Lower leg skin (tissue), 4 donors: ENCODE measurements at regions of chr6 and their contacts with region 1.

Region 1: DNA sequence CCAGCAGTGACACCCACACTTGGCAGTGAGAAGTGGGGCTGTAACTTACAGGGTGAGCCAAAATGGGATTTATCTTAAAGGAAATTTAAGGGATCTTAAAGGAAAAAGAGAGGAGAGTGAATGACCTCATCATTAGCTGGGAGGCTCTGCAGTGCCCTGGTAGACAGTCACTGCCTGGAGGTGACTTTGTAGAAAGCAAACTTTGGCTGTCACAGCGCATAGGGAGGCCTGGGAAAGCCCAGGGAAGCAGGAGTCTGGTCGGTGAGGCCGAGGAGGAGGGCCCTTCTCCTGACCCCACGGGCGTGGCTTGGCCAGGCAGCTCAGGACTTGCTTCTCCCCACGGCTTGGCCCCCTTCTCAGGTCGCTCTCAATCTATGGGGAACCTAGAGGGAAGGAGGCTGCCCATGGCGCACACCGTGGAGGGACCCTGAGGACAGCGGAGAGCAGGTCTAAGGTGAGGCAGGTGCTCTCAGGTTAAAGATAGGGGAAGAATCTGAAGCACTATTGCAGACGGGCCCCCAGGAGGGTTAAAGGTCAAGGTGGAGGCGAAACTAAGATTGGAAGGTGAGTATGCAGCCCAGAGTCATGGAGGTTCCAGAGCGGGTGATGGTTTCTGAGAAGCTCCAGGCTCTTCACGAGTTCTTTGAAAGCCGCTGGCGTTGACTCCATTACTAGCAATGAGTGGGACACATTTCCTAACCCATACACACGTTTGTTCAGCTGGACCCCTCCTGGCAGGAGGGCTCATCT is 15.6 kb upstream of the RIPK1 start:
- DNase-seq: no peak
- H3K4me3 ChIP-seq: no peak overlapping the region
- CTCF ChIP-seq: no peak
- POLR2A ChIP-seq: no peak

Region 2: GRCh38 chr6:2999618-3000557 is 52.8 kb before region 1 on chr6 and contains the start of gene NQO2:
- intact Hi-C with region 1: loop called (anchors 2 kb)
- DNase-seq: peak; percentile 89 to 99
- H3K4me3 ChIP-seq: peak within 1 kb of the TSS; percentile 62
- CTCF ChIP-seq: no peak
- POLR2A ChIP-seq: peak in 1 of 2 donors; percentile 56
- total RNA-seq, gene NQO2: 24.4 to 40.5 (median 36.7) TPM

Region 3: DNA sequence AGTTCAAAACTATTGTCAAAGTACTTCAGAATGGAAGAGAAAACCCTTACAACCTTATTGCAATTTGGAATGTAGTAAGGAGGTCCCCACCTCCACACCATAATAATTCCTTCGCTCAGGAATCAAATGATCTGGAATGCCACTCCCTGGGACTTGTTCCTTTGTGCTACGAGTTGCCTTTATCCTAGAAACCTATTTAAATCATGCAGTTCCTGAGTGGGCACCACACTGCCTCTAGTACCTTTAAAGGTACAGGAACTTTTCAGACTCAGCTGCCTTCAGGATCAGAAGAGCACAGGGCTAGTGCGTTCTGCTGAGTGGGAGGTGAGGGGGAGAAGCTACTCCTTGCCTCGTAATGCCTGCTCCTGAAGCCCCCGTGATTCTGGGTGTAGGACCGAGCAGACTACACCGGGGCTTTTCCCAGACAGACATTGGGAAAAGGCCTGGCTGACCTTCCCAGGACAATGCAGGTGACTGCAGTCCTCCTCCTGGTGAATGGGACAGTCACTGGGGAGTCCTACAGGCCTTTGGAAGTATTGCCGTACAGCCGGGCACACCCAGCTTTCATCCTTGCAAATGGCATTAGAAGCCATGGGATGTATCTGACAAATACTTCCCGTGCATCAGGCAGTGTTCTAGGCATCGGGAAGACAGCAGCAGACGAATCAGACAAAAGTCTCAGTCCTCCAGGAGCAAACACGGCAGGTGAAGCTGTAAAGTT is 186.6 kb after region 1 on chr6:
- intact Hi-C with region 1: no loop called
- DNase-seq: peak in 1 of 2 donors; percentile 67
- H3K4me3 ChIP-seq: no peak overlapping the region
- CTCF ChIP-seq: no peak
- POLR2A ChIP-seq: no peak